Activated CD8-positive, alpha-beta T cell treated with anti-CD3 and anti-CD28 coated beads for 36 hours (primary cell): ENCODE measurements at regions of chr2 and their contacts with region 1.

Region 1: DNA sequence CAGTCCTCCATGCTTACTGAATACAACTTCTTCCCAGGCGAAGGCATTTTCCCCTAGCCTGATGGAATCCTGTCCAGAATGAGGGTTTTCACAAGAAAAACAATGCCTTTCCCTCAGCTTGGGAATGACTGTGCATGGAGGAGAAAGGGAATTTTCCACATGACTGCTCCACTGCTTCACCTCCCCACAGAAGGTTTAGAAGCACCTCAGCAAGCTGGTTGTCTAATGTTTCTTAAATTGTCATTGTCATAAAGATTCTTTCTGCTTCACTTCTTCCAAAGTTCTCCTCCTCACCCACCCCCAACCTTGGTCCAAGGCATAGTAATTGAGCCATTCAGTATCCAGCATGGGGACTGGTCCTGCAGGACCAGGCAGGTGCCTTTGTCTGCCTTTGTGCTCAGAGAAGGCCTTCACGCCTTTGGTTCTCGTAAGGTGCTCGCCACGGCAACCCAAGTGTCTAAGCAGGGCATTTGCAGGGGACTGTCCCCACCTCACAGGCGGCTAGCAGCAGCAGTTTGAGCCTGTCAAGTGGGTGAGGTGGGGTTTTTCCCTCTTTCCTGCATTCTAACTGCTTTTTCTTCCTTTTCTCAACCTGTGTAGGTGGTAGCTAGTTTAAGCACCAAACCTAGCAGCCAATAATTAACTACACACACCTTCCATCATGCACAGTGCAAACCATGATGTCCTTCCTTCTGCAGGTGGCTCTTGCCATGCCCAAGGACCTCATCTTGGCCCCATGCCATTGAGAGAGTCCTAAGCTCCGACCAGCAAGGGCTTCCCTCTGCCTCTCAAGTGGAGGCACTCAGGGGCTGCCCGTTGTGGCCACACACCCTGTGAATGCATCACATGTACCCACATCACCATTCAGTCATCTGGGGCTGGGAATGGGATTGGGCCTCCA is 65.7 kb upstream of the BCL2L11 start:
- DNase-seq: peak; percentile 89
- ATAC-seq: peak; percentile 90
- H3K4me3 Mint-ChIP-seq: no peak overlapping the region
- H3K27ac Mint-ChIP-seq: peak overlapping the region; percentile 41
- H3K4me1 Mint-ChIP-seq: peaks cover 39% of the 10 kb centered on the region
- H3K27me3 Mint-ChIP-seq: peaks cover 13% of the 10 kb centered on the region
- CTCF ChIP-seq: no peak

Region 2: GRCh38 chr2:110853507-110853906 is 201.5 kb before region 1 on chr2:
- CTCF ChIA-PET with region 1: interaction called, 4 read pairs
- POLR2A ChIA-PET with region 1: interaction called, 3 read pairs
- intact Hi-C with region 1: loop called (anchors 5 kb)
- DNase-seq: peak; percentile 83
- ATAC-seq: peak; percentile 31
- H3K4me3 Mint-ChIP-seq: no peak overlapping the region
- H3K27ac Mint-ChIP-seq: peak overlapping the region; percentile 72
- H3K4me1 Mint-ChIP-seq: peaks cover 81% of the 10 kb centered on the region
- H3K27me3 Mint-ChIP-seq: peaks cover 6% of the 10 kb centered on the region
- CTCF ChIP-seq: peak; percentile 76

Region 3: GRCh38 chr2:111022633-111023032 is 32.4 kb before region 1 on chr2:
- CTCF ChIA-PET with region 1: no interaction called
- POLR2A ChIA-PET with region 1: no interaction called
- intact Hi-C with region 1: no loop called
- DNase-seq: no peak
- ATAC-seq: no peak
- H3K4me3 Mint-ChIP-seq: no peak overlapping the region
- H3K27ac Mint-ChIP-seq: no peak overlapping the region
- H3K4me1 Mint-ChIP-seq: peaks cover 4% of the 10 kb centered on the region
- H3K27me3 Mint-ChIP-seq: peaks cover 9% of the 10 kb centered on the region
- CTCF ChIP-seq: no peak

Region 4: DNA sequence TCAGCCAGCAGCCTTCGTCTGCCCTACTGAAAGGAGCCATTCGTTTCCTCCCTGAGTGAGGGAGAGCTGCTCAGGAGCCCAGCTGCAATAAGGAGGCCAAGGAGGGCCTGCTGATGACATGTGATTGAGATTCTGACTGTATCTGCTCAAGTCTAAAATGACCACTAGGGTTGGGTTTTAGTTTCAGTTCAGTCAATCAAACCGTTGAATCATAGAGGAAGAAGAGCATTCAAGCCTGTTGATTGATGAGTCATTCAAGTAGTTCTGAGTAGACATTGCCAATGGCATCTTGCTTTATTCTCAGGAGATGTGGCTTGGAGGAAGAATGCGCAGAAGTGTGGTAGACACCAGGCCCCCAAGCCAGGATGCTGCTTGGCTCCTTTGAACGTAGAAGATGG is 45.7 kb after region 1 on chr2:
- CTCF ChIA-PET with region 1: interaction called, 3 read pairs
- POLR2A ChIA-PET with region 1: interaction called, 3 read pairs
- intact Hi-C with region 1: loop called (anchors 2 kb)
- DNase-seq: peak; percentile 38
- ATAC-seq: peak; percentile 90
- H3K4me3 Mint-ChIP-seq: no peak overlapping the region
- H3K27ac Mint-ChIP-seq: peak overlapping the region; percentile 52
- H3K4me1 Mint-ChIP-seq: peaks cover 20% of the 10 kb centered on the region
- H3K27me3 Mint-ChIP-seq: peaks cover 14% of the 10 kb centered on the region
- CTCF ChIP-seq: no peak